ENCODE measurements at regions of chr17 and their contacts with region 1.

Region 1: GRCh38 chr17:81238817-81239600 is at the starts of genes NDUFAF8 and TEPSIN:
- DNase-seq: peak; percentile 97
- ATAC-seq: peak; percentile 99
- H3K4me3 Mint-ChIP-seq: peak within 1 kb of the TSS; percentile 93
- H3K27ac Mint-ChIP-seq: peak within 1 kb of the TSS; percentile 96
- H3K4me1 Mint-ChIP-seq: peaks cover 25% of the 10 kb centered on the region
- H3K27me3 Mint-ChIP-seq: no peaks in the 10 kb centered on the region
- total RNA-seq, gene NDUFAF8: 31.0 to 57.9 TPM
- total RNA-seq, gene TEPSIN: 17.8 to 20.3 TPM

Region 2: GRCh38 chr17:80991645-80992076 is 247.3 kb before region 1 on chr17 and contains the start of gene CHMP6:
- CTCF ChIA-PET with region 1: no interaction called
- POLR2A ChIA-PET with region 1: no interaction called
- intact Hi-C with region 1: loop called in 1 of 2 experiments (anchors 1 kb)
- DNase-seq: peak; percentile 83
- ATAC-seq: peak; percentile 49
- H3K4me3 Mint-ChIP-seq: peak within 1 kb of the TSS; percentile 69
- H3K27ac Mint-ChIP-seq: peak within 1 kb of the TSS; percentile 74
- H3K4me1 Mint-ChIP-seq: peaks cover 21% of the 10 kb centered on the region
- H3K27me3 Mint-ChIP-seq: peaks cover 3% of the 10 kb centered on the region
- total RNA-seq, gene CHMP6: 15.9 to 19.4 TPM

Region 3: GRCh38 chr17:81094509-81095382 is 144.3 kb before region 1 on chr17:
- CTCF ChIA-PET with region 1: interaction called, 3 read pairs
- POLR2A ChIA-PET with region 1: no interaction called
- intact Hi-C with region 1: loop called in 1 of 2 experiments (anchors 2 kb)
- DNase-seq: peak; percentile 95
- ATAC-seq: peak; percentile 95
- H3K4me3 Mint-ChIP-seq: peak overlapping the region; percentile 26
- H3K27ac Mint-ChIP-seq: peak overlapping the region; percentile 60
- H3K4me1 Mint-ChIP-seq: peaks cover 43% of the 10 kb centered on the region
- H3K27me3 Mint-ChIP-seq: no peaks in the 10 kb centered on the region

Region 4: GRCh38 chr17:81267390-81268067 is 28.5 kb after region 1 on chr17:
- CTCF ChIA-PET with region 1: no interaction called
- POLR2A ChIA-PET with region 1: no interaction called
- intact Hi-C with region 1: no loop called
- DNase-seq: no peak
- ATAC-seq: no peak
- H3K4me3 Mint-ChIP-seq: no peak overlapping the region
- H3K27ac Mint-ChIP-seq: no peak overlapping the region
- H3K4me1 Mint-ChIP-seq: peaks cover under 1% of the 10 kb centered on the region
- H3K27me3 Mint-ChIP-seq: no peaks in the 10 kb centered on the region

Region 5: DNA sequence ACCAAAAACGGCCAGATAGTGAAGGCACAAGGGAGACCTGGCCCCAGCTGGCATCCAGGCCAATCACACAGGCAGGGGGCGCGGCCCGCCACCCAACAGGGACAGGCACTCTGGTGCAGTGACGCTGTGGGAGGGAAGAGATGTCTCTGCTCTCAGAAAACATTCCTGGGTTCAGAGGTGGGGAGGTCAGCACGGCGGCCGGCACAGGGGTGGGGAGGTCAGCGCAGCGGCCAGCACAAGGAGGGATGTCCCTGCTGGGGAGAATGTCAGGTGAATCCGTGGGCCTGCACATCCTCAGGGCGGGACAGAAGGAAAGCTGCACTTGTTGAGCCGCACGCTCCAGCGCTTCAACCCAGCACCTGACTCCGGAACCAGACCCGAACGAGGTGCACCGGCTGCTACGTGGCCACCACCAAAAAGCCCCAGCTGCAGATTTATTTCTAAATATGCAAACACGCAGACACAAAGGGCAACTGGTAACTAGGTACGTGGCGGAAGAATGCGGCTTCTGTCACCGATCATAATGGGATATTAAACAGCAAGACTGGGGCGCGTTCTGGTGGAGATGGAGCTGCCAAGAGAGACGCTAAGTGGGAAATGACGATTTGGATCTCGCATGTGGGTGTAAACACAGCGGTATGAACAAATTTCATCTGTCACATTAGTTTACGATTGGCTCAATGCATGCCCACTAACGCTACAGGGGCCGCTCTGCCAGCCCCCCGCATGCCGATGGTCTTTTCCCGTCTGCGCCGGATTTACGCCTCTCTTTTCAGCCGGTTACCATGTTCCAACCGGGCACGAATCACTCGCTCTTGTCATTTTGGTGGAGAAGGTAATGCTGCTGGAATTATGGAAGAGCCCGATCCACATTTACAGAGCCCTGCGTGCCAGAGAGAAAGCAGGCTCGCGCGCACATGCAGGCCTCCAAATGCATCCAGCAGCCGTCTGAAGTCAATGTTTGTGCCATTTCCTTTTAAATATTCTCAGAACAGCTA is 40.6 kb after region 1 on chr17:
- CTCF ChIA-PET with region 1: no interaction called
- POLR2A ChIA-PET with region 1: no interaction called
- intact Hi-C with region 1: no loop called
- DNase-seq: no peak
- ATAC-seq: no peak
- H3K4me3 Mint-ChIP-seq: no peak overlapping the region
- H3K27ac Mint-ChIP-seq: no peak overlapping the region
- H3K4me1 Mint-ChIP-seq: peaks cover 3% of the 10 kb centered on the region
- H3K27me3 Mint-ChIP-seq: no peaks in the 10 kb centered on the region

Region 6: GRCh38 chr17:81294856-81295680 is 56.1 kb after region 1 on chr17 and contains the start of gene SLC38A10:
- CTCF ChIA-PET with region 1: no interaction called
- POLR2A ChIA-PET with region 1: no interaction called
- intact Hi-C with region 1: loop called in 1 of 2 experiments (anchors 1 kb)
- DNase-seq: peak; percentile 95
- ATAC-seq: peak; percentile 91
- H3K4me3 Mint-ChIP-seq: peak within 1 kb of the TSS; percentile 89
- H3K27ac Mint-ChIP-seq: peak within 1 kb of the TSS; percentile 96
- H3K4me1 Mint-ChIP-seq: peaks cover 36% of the 10 kb centered on the region
- H3K27me3 Mint-ChIP-seq: no peaks in the 10 kb centered on the region
- total RNA-seq, gene SLC38A10: 47.6 to 52.9 TPM

Region 7: DNA sequence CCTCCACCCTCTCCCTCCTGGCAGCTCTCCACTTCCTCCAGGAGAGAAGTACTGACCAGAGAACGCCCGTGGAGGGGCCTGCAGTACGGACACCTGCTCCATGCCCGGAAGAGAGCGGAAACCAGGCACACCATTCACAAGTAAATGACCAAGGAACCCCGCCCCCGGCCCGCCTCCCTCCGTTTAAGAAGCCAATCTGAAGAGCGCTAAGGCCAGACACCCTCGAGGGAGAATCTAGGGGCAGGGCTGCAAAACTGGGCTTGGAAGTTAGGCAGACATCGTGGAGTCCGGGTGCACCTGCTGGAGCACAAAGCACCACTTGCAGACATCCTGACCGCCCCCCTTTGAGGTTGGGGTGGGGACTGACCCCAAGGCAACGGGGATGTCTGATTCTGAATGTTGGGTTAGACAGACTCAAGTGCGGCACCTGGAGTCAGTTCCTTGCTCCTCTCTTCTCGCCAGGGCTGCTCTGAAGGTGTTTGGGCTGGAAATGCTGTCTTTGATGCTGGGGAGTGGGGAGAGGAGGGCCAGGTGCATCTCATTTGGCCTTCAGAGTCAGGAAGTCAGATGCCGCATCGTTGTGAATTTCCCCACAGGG is 314.1 kb after region 1 on chr17:
- CTCF ChIA-PET with region 1: no interaction called
- POLR2A ChIA-PET with region 1: interaction called, 4 read pairs
- intact Hi-C with region 1: loop called in 1 of 2 experiments (anchors 1 kb)
- DNase-seq: peak; percentile 91
- ATAC-seq: peak; percentile 78
- H3K4me3 Mint-ChIP-seq: peak overlapping the region; percentile 89
- H3K27ac Mint-ChIP-seq: peak overlapping the region; percentile 86
- H3K4me1 Mint-ChIP-seq: peaks cover 38% of the 10 kb centered on the region
- H3K27me3 Mint-ChIP-seq: no peaks in the 10 kb centered on the region